ENCODE measurements at regions of chr10 and their contacts with region 1.

Region 1: DNA sequence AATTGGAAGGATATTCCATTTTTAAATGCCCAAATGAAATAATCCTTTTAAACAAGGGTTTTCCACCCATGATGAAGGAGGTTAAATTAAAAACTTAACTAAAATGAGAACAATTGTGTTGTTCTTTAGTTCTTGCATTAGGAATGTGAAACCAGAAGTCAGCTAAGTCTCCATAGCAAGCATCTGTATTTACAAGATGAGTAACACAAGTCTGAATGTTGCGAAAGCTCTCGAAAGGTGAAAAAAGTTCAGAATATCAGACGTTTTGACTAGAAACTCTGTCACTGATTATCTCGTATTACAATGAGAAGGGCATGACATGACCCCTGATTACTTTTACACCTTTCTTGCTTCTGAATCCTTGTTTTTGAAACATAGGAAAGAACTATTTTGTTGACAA is 149.6 kb downstream of the BICC1 start:
- DNase-seq: peak; percentile 90
- H3K4me3 ChIP-seq: peak overlapping the region in 1 of 3 experiments; percentile 19
- H3K27ac ChIP-seq: peak overlapping the region; percentile 95
- H3K4me1 ChIP-seq: peaks cover 44% of the 10 kb centered on the region
- H3K27me3 ChIP-seq: no peaks in the 10 kb centered on the region
- CTCF ChIP-seq: no peak

Region 2: DNA sequence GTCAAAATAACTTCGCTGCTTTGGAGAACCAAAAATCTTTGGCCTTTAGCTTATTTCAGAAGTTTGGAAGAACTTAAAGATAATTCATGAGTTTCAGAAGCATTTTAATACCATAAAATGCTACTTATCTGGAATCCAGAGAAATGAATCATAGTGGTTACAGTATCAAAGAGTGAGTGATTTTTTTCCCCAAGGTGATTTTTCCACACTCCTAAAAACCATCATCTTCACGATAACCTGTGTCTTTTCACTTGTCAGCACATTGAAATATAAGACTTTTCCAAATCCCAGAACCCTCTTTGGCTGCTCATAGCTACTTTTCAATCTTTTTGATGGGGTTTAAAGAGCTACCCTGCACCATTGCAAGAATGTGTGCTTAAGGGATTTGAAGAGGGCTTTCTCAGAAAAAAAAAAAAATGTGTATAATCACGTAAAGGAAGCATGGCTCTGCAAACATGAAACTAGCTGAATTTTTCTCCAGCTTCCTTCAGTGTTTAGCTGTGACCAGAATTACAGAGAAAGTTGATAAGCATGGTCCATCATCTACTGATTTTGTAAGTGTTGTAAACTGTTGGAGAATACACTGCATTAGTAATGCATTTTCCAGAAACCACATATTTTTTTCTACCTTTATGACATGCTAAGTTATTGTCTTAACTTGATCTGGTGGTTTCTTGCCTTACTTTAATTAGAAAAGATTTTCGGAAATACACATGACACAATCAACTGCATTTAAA is 14.8 kb before region 1 on chr10:
- CTCF ChIA-PET with region 1: no interaction called
- dilution Hi-C with region 1: no loop called
- in situ Hi-C with region 1: no loop called
- intact Hi-C with region 1: loop called (anchors 1 kb)
- DNase-seq: peak; percentile 81
- H3K4me3 ChIP-seq: no peak overlapping the region
- H3K27ac ChIP-seq: peak overlapping the region; percentile 61
- H3K4me1 ChIP-seq: peaks cover 40% of the 10 kb centered on the region
- H3K27me3 ChIP-seq: no peaks in the 10 kb centered on the region
- CTCF ChIP-seq: no peak

Region 3: DNA sequence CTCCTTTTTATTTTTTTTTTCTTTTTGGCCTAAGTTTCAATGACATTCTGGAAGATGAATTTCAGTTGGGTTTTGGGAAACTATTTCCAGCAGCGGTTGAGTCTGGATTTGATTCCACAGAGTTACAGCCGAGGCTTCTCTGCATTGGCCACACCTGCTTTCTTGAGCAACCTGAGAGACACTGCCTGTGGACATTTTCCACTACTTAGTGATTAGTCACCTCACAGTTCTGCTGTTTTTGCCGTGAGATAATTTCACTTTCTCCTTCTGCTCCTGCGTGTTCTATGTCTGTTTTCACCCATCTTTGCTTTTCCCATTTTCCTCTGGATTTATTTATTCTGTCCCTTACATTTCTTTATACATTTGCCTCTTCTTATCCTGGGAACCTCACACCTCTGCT is 93.4 kb after region 1 on chr10:
- CTCF ChIA-PET with region 1: no interaction called
- dilution Hi-C with region 1: no loop called
- in situ Hi-C with region 1: no loop called
- intact Hi-C with region 1: loop called (anchors 5 kb)
- DNase-seq: peak; percentile 77
- H3K4me3 ChIP-seq: peak overlapping the region; percentile 39 to 64 (median 61)
- H3K27ac ChIP-seq: peak overlapping the region; percentile 87
- H3K4me1 ChIP-seq: peaks cover 12% of the 10 kb centered on the region
- H3K27me3 ChIP-seq: no peaks in the 10 kb centered on the region
- CTCF ChIP-seq: no peak